MCF 10A (cell line): ENCODE measurements at regions of chr3 and their contacts with region 1.

Region 1: GRCh38 chr3:148861277-148861869 is 3.7 kb upstream of the CPA3 start:
- DNase-seq: peak; percentile 71
- H3K4me3 Mint-ChIP-seq: no peak overlapping the region
- H3K27ac Mint-ChIP-seq: no peak overlapping the region
- H3K4me1 Mint-ChIP-seq: no peaks in the 10 kb centered on the region
- H3K27me3 Mint-ChIP-seq: peaks cover 74% of the 10 kb centered on the region
- CTCF ChIP-seq: peak; percentile 66

Region 2: GRCh38 chr3:148379763-148380382 is 481.5 kb before region 1 on chr3:
- CTCF ChIA-PET with region 1: interaction called, 10 read pairs
- POLR2A ChIA-PET with region 1: no interaction called
- intact Hi-C with region 1: loop called (anchors 10 kb)
- DNase-seq: peak; percentile 59
- H3K4me3 Mint-ChIP-seq: no peak overlapping the region
- H3K27ac Mint-ChIP-seq: no peak overlapping the region
- H3K4me1 Mint-ChIP-seq: no peaks in the 10 kb centered on the region
- H3K27me3 Mint-ChIP-seq: peaks cover 30% of the 10 kb centered on the region
- CTCF ChIP-seq: peak; percentile 38

Region 3: GRCh38 chr3:148500881-148501280 is 360.5 kb before region 1 on chr3:
- CTCF ChIA-PET with region 1: no interaction called
- POLR2A ChIA-PET with region 1: no interaction called
- intact Hi-C with region 1: no loop called
- DNase-seq: no peak
- H3K4me3 Mint-ChIP-seq: no peak overlapping the region
- H3K27ac Mint-ChIP-seq: no peak overlapping the region
- H3K4me1 Mint-ChIP-seq: no peaks in the 10 kb centered on the region
- H3K27me3 Mint-ChIP-seq: peaks cover 48% of the 10 kb centered on the region
- CTCF ChIP-seq: no peak

Region 4: GRCh38 chr3:148847351-148847750 is 14.0 kb before region 1 on chr3:
- CTCF ChIA-PET with region 1: interaction called, 19 read pairs
- POLR2A ChIA-PET with region 1: no interaction called
- intact Hi-C with region 1: no loop called
- DNase-seq: peak; percentile 13
- H3K4me3 Mint-ChIP-seq: no peak overlapping the region
- H3K27ac Mint-ChIP-seq: no peak overlapping the region
- H3K4me1 Mint-ChIP-seq: no peaks in the 10 kb centered on the region
- H3K27me3 Mint-ChIP-seq: peaks cover 22% of the 10 kb centered on the region
- CTCF ChIP-seq: no peak

Region 5: DNA sequence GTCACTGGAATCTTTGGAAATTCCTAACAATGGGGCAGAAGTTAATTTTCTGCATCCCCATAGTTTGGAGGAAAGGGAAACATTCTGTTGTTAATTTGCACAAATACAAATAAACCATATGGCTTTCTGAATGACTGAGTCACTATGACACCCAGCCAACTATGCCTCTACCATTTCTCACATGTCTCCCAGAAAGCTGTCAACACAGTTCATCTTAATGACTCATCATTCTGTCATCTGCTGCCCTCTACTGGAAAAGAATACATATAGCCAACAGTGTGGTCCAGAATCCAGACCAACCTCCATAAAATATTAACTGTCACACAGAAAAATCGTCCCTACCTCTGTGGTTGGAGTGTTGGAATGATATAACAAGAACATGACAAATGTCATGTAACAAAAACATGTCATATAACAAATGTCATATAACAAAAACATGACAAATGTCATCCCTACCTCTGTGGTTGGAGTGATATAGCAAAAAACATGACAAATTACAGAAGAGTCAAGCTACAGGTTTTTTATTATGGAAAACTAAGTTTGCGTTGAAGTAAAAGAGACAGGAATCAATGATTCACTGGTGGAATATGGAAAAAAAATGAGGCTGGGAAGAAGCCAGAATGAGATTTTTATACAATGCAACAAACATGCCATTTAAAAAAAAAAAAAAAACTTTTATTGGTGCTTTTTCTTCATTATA is 82.3 kb after region 1 on chr3:
- CTCF ChIA-PET with region 1: interaction called, 296 read pairs
- POLR2A ChIA-PET with region 1: interaction called, 3 read pairs
- intact Hi-C with region 1: loop called (anchors 1 kb)
- DNase-seq: peak; percentile 91
- H3K4me3 Mint-ChIP-seq: no peak overlapping the region
- H3K27ac Mint-ChIP-seq: no peak overlapping the region
- H3K4me1 Mint-ChIP-seq: no peaks in the 10 kb centered on the region
- H3K27me3 Mint-ChIP-seq: peaks cover 53% of the 10 kb centered on the region
- CTCF ChIP-seq: peak; percentile 71

Region 6: GRCh38 chr3:149129326-149130205 is 268.2 kb after region 1 on chr3 and contains the start of gene HPS3:
- CTCF ChIA-PET with region 1: no interaction called
- POLR2A ChIA-PET with region 1: interaction called, 3 read pairs
- intact Hi-C with region 1: loop called (anchors 10 kb)
- DNase-seq: peak; percentile 88
- H3K4me3 Mint-ChIP-seq: peak within 1 kb of the TSS; percentile 93
- H3K27ac Mint-ChIP-seq: peak within 1 kb of the TSS; percentile 75
- H3K4me1 Mint-ChIP-seq: peaks cover 28% of the 10 kb centered on the region
- H3K27me3 Mint-ChIP-seq: no peaks in the 10 kb centered on the region
- CTCF ChIP-seq: no peak
- total RNA-seq, gene HPS3: 7.7 and 11.1 TPM in 2 replicates